Natural killer cell (primary cell): ENCODE measurements at regions of chr20 and their contacts with region 1.

Region 1: DNA sequence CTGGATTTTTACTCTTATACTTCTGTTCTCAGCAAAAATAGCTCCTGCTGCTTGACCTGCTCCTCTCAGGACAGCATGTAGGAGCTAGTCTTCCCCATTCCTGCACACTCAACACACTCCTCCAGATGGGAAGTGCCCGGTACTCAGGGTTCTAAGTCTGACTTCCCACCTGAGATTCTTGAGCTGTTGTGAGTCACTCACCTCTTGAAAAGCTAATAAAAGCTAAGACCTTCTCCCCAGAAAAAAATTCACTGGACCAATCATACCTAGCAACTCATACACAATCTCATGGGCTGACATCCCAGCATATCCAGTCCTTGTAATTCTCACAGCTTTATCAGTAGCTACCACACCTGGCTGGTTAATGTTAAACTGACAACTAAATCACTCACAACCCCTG is 53.5 kb downstream of the TRPC4AP start:
- DNase-seq: no peak
- ATAC-seq: no peak
- H3K4me3 ChIP-seq: no peak overlapping the region
- H3K4me3 Mint-ChIP-seq: no peak overlapping the region
- H3K27ac ChIP-seq: no peak overlapping the region
- H3K27ac Mint-ChIP-seq: peak overlapping the region; percentile 34 to 43
- H3K4me1 ChIP-seq: no peaks in the 10 kb centered on the region
- H3K4me1 Mint-ChIP-seq: peaks cover 7% of the 10 kb centered on the region in 2 donors
- H3K27me3 ChIP-seq: no peaks in the 10 kb centered on the region
- H3K27me3 Mint-ChIP-seq: no peaks in the 10 kb centered on the region
- CTCF ChIP-seq: no peak

Region 2: DNA sequence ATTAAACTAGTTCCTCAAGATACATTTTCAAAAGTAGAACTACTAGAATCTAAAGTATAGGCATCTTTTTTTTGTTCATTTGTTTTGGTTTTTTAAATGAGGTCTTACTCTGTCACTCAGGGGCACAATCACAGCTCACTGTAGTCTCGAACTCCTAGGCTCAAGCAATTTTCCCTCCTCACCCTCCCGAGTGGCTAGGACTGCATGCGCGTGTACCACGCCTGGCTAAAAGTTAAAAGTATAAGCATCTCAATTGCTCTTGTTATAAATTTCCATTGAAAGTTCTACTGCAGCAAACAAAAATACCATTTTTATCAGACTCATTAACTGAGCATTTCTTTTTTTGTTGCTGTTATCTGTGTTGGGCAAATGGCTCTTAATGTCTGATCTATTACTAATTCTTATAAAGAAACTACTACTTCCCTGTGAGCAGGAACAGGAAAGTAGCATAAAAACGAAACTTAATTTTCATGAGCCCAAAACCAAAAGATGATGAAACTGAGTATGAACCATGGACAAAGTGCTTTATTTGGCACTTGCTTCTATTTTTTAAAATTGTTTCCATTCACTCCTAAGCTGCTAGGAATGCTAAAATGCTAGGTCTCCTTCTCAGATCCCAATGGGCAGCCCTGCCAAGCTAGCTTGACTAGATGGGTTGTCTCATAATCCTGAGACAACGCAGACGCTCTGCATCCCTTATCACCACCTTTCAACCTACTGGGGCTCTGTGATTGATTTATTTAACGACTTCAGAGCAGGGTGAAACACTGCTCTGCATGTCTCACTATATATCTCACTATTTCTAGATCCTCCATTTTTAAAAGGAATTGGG is 16.5 kb after region 1 on chr20:
- intact Hi-C with region 1: no loop called
- DNase-seq: no peak
- ATAC-seq: no peak
- H3K4me3 ChIP-seq: no peak overlapping the region
- H3K4me3 Mint-ChIP-seq: no peak overlapping the region
- H3K27ac ChIP-seq: no peak overlapping the region
- H3K27ac Mint-ChIP-seq: peak overlapping the region in 1 of 2 donors; percentile 71
- H3K4me1 ChIP-seq: no peaks in the 10 kb centered on the region
- H3K4me1 Mint-ChIP-seq: peaks cover 40 to 49% of the 10 kb centered on the region in 2 donors
- H3K27me3 ChIP-seq: no peaks in the 10 kb centered on the region
- H3K27me3 Mint-ChIP-seq: no peaks in the 10 kb centered on the region
- CTCF ChIP-seq: no peak

Region 3: GRCh38 chr20:35939264-35939663 is 900.1 kb after region 1 on chr20:
- intact Hi-C with region 1: loop called (anchors 10 kb)
- DNase-seq: no peak
- ATAC-seq: no peak
- H3K4me3 ChIP-seq: no peak overlapping the region
- H3K4me3 Mint-ChIP-seq: no peak overlapping the region
- H3K27ac ChIP-seq: no peak overlapping the region
- H3K27ac Mint-ChIP-seq: no peak overlapping the region
- H3K4me1 ChIP-seq: no peaks in the 10 kb centered on the region
- H3K4me1 Mint-ChIP-seq: peaks cover 0 to 5% of the 10 kb centered on the region in 2 donors
- H3K27me3 ChIP-seq: no peaks in the 10 kb centered on the region
- H3K27me3 Mint-ChIP-seq: no peaks in the 10 kb centered on the region
- CTCF ChIP-seq: no peak